ENCODE measurements at regions of chr1 and their contacts with region 1.

Region 1: DNA sequence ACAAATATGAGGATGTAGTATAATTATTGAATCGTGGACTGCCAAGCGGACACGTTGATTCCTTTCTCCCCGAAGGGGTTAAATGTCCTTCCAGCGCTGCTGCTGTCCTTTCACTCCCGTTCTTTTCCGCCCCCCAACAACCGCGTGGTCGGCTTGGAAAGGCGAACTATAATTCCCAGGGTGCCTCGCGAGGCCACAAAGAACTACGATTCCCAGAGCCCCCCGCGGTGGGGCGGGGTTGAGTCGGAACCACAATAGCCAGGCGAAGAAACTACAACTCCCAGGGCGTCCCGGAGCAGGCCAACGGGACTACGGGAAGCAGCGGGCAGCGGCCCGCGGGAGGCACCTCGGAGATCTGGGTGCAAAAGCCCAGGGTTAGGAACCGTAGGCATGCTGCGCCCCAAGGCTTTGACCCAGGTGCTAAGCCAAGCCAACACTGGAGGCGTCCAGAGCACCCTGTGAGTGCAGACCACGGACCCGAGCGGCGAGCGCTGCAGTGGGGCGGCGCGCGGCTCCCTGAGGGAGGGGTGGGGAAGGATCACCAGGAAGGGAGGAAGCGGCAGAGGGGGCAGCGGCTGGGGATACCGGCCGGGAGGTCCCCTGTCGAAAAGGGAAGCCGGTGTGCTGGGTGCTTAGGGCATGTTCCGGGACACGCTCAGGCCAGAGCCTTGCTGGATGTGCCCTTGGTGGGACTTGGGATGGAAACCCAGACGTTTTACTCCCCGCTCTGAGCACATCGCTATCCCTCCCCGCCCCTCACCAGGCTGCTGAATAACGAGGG is at the start of gene LAMTOR2:
- DNase-seq: peak; percentile 98 to 99 (median 98)
- H3K4me3 ChIP-seq: peak within 1 kb of the TSS; percentile 63 to 99 (median 93)
- H3K27ac ChIP-seq: peak within 1 kb of the TSS; percentile 68 to 98 (median 95)
- H3K27me3 ChIP-seq: no peaks in the 10 kb centered on the region
- CTCF ChIP-seq: peak in 44 of 56 donors; percentile 10 to 55 (median 32)
- total RNA-seq, gene LAMTOR2: 26.8 to 59.6 (median 43.5) TPM

Region 2: GRCh38 chr1:155934097-155934935 is 120.4 kb before region 1 on chr1 and contains the start of gene KHDC4:
- intact Hi-C with region 1: loop called (anchors 2 to 10 kb)
- DNase-seq: peak; percentile 92 to 98 (median 96)
- H3K4me3 ChIP-seq: peak within 1 kb of the TSS; percentile 65 to 100 (median 93)
- H3K27ac ChIP-seq: peak within 1 kb of the TSS; percentile 65 to 99 (median 95)
- H3K27me3 ChIP-seq: no peaks in the 10 kb centered on the region
- CTCF ChIP-seq: peak in 49 of 56 donors; percentile 5 to 66 (median 35)
- total RNA-seq, gene KHDC4: 33.7 to 80.2 (median 50.9) TPM

Region 3: DNA sequence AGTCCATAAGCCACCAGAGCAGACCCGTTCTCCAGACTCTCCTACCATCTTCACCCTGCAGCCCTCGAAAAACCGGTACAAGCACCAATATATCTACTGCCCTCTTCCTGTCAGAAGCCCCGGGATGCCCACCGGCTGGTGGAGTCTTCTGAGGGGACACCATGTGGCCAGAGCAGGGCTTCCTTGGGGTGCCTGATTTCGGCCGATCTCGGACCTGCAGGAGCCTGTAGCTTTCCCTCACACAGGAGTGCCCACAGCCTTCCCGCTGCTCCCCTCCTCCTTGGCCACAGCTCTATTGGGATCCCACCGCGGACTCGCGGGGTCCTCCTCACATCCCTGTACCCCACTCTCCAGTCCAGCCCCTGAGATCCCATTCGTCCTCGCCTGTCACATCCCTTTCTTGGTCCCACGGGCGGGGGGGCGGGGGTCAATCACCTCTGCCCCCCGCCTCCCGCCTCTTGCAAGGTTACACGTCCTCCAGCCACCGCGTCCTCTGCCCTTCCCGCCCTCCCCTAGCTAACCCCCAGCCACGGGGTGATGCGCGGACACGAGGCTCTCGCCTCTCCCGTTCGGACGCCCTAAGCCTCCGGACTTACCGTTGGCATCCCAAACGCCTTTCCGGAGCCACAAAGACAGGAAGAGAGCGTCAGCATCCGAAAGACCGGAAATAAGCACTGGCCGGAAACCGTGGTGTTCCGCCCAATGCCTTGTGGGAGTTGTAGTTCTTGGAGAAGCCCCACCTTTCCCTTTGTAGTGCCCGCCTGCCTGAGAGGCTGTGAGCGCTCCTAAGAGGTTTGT is 34.2 kb before region 1 on chr1 and contains the start of gene SSR2:
- intact Hi-C with region 1: loop called (anchors 1 kb)
- DNase-seq: peak; percentile 79 to 93 (median 90)
- H3K4me3 ChIP-seq: peak within 1 kb of the TSS; percentile 59 to 96 (median 86)
- H3K27ac ChIP-seq: peak within 1 kb of the TSS in 55 of 59 donors; percentile 2 to 92 (median 78)
- H3K27me3 ChIP-seq: no peaks in the 10 kb centered on the region
- CTCF ChIP-seq: peak in 21 of 56 donors; percentile 4 to 41 (median 23)
- total RNA-seq, gene SSR2: 55.2 to 94.2 (median 71.4) TPM

Region 4: GRCh38 chr1:156082309-156083091 is 27.8 kb after region 1 on chr1 and contains the start of gene MEX3A:
- intact Hi-C with region 1: loop called (anchors 2 kb)
- DNase-seq: peak; percentile 71 to 90 (median 76)
- H3K4me3 ChIP-seq: peak within 1 kb of the TSS; percentile 68 to 94 (median 84)
- H3K27ac ChIP-seq: peak within 1 kb of the TSS in 36 of 59 donors; percentile 6 to 86 (median 46)
- H3K27me3 ChIP-seq: no peaks in the 10 kb centered on the region
- CTCF ChIP-seq: peak in 19 of 56 donors; percentile 7 to 47 (median 23)
- total RNA-seq, gene MEX3A: 0.44 to 4.6 (median 1.3) TPM